ENCODE measurements at regions of chr9 and their contacts with region 1.

Region 1: DNA sequence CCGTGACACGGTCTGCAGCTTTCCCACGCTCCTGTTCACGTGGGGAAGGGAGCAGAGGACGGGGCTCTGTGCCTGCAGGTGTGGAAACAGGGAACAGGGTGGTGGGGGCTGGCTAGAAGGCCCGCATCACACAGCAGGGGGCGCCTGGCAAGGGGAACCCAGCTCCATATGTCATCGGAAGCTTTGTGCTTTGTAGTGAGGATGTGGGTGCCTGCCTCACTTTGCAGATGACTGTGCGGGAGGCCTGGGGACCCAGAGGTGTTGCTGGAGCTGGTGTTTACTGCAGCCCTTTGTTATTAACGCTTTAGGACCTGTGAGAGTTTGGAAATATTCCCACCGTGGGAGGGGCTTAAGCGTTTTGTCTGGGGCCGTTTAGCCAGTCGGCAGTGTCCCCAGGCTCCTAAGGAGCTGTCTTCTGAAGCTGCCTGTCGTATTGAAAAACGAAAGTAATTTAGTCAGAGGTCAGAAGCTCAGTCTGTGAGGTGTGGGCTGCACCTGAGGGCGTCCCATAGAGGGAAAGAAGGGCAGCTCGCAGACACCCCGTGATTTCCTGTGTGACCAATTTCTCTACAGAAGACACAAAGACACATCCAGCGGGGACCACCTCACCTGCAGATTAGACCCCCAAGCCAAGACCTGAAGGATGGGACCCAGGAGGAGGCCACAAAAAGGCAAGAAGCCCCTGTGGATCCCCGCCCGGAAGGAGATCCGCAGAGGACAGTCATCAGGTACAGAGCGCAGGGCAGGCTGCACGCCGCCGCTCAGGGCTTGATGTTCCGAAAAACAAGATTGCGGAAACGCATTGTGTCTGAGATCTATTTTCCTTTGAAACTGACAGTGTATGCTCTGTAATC is 9.1 kb downstream of the MAN1B1 start:
- DNase-seq: peak; percentile 87
- CTCF ChIP-seq: peak; percentile 71

Region 2: DNA sequence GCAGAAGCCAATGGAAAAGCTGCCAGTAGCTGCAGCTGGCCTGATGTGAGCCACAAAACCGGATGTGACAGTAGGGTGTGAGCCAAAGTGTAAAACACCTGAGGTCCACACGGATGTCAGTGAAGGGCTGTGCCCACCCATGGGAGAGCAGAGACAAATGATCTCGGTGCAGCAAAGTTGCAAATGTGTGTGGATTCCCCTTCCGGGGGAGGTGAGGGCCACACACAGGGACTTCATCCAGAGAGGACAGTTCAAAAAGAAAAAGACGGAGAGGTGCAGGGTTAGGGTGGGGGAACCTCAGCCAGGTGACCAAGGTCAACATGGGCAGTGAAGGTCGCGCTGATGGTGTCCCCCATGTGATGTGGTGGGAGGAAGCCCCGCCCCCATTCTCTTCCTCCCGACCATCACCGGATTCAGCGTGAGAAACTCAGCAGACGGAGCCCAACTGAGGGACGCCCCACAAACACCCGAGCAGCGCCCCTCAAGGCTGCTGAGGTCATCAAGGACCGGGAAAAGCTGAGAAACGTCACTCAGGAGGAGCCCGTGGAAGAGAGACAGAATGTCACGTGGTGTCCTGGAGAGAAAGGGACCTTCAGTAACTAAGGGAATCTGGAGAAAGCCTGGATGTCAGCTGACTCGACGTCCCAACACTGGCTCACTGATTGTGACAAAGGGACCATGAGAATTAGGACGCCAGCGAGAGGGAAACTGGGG is 130.0 kb before region 1 on chr9:
- CTCF ChIA-PET with region 1: no interaction called
- POLR2A ChIA-PET with region 1: no interaction called
- DNase-seq: no peak
- CTCF ChIP-seq: no peak

Region 3: DNA sequence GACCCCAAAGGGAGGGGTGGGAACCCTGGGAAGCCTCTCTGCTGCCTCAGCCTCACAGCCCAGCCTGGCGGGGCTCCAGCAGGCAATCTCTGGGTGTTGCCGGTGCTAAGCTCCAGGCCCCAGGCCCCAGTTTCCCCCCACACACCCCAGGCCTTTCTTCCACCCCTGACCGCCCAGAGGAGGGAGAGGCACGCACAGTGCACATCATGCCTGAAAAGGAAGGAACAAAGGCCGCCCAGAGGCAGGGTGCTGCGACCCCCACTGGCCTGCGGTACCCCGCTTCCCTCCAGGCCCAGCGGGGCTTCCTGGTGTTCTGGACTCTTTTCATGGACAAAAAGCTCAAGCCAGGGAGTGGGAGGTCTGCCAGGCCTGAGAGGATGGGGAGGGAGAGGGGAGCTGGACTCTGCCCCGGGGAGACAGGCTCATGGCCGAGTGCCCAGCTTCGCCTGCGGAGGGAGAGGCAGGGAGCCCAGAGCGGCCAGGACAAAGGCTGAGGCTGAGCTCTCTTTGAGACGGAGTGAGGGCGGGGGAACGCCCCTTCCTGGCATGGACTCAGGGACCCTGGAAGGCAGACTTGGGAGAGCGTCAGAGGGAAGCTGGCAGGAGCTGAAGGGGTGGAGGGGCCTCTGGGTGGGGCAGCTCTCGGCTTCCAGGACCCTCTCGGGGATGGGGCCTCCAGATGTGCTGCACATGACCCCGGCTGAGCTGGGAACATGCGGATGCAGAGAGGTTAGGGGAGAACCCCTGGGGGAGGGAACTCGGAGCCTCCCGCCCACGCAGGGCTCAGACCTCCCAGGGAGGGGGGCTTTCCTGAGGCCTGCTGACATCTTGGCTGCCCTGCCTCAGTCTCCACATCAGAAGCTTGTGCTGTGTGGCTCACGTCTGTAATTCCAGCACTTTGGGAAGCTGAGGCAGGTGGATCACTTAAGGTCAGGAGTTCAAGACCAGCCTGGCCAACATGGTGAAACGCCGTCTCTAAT is 40.2 kb before region 1 on chr9:
- CTCF ChIA-PET with region 1: no interaction called
- POLR2A ChIA-PET with region 1: no interaction called
- DNase-seq: no peak
- CTCF ChIP-seq: no peak

Region 4: GRCh38 chr9:137107312-137107921 is 11.5 kb after region 1 on chr9:
- CTCF ChIA-PET with region 1: interaction called, 18 read pairs
- POLR2A ChIA-PET with region 1: interaction called, 4 read pairs
- DNase-seq: no peak
- CTCF ChIP-seq: no peak

Measured in GM10248 (cell line).